Activated B cell treated with CpG ODN at 0.5 μM for 24 hours (primary cell): ENCODE measurements at regions of chr12 and their contacts with region 1.

Region 1: DNA sequence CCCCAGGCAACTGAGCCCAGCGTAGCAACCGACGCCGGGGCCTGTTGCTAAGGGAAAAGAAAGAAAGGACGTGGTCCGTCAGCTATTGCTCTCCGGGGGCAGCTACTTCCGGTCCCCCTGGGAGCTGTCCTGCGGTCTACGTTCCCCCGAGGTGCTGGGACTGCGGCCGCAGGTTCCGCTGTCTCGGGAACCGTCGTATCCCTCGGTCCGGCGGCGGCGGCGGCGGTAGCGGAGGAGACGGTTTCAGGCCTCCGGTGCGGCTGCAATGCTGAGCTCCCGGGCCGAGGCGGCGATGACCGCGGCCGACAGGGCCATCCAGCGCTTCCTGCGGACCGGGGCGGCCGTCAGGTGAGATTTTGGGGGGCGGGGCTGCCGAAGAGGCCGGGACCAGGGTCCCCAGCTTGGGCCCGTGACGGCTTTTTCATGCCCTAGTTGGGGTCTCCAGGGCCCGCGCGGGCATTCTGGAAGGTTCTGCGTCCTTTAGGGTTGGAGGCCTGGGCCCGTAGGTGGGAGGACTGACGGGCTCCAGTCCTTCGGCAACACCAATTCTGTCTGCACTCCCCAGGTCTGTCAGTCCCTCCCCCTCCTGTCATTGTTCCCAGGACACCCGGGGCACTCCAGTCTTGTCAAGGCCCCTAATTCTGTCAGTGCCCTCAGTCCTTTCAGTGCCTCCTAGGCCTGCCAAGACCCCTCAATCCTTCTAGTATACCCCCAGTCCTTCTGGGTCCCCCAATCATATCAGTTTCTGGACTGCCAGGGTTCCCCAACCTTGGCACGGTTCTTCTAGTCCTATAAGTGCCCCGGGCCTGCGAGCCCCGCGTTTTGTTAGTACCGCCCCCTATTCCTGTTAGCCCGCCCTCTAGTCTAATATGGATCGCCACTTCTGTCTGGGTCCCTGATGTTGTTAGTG is at the start of gene USP30:
- DNase-seq: peak; percentile 80
- ATAC-seq: peak; percentile 85
- H3K4me3 Mint-ChIP-seq: peak within 1 kb of the TSS; percentile 85
- H3K27ac Mint-ChIP-seq: peak within 1 kb of the TSS; percentile 86
- H3K4me1 Mint-ChIP-seq: peaks cover 22% of the 10 kb centered on the region
- H3K27me3 Mint-ChIP-seq: no peaks in the 10 kb centered on the region
- CTCF ChIP-seq: no peak
- total RNA-seq, gene USP30: 17.4 and 17.7 TPM in 2 replicates

Region 2: GRCh38 chr12:107685360-107686248 is 1367.1 kb before region 1 on chr12 and contains the start of gene PWP1:
- CTCF ChIA-PET with region 1: no interaction called
- POLR2A ChIA-PET with region 1: no interaction called
- intact Hi-C with region 1: loop called (anchors 1 kb)
- DNase-seq: peak; percentile 93
- ATAC-seq: peak; percentile 90
- H3K4me3 Mint-ChIP-seq: peak within 1 kb of the TSS; percentile 96
- H3K27ac Mint-ChIP-seq: peak within 1 kb of the TSS; percentile 97
- H3K4me1 Mint-ChIP-seq: peaks cover 23% of the 10 kb centered on the region
- H3K27me3 Mint-ChIP-seq: no peaks in the 10 kb centered on the region
- CTCF ChIP-seq: no peak
- total RNA-seq, gene PWP1: 49.4 and 53.5 TPM in 2 replicates

Region 3: DNA sequence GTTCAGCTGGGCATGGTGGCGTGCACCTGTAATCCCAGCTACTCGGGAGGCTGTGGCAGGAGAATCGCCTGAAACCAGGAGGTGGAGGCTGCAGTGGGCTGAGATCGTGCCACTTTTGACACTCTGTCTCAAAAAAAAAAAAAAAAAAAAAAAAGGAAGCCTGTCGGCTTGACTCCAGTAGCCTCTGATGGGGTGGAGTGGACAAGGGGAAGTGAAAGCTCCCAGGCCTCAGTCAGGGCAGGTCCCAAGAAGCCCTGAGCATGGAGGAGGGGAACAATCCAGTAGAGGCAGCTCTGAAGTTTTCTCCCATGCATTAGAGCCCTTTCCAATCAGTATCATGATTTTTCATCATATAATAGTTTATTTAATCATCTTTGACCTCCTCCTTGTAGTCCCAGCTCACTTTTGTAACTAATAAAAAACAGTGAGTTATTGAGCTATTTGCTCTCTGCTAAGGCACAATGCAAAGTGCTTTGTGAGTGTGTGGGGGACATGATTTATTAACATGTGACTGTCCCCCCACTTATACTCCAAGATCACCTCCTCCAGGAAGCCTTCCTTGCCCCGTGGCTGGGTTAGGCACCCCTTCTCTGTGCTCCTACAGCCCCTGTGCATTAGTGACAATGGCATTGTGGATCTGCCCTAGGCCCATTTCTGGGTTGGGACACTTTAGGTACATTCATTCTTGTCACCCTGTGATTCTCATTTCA is 190.6 kb before region 1 on chr12:
- CTCF ChIA-PET with region 1: no interaction called
- POLR2A ChIA-PET with region 1: interaction called, 4 read pairs
- intact Hi-C with region 1: loop called (anchors 2 kb)
- DNase-seq: peak; percentile 44
- ATAC-seq: peak; percentile 47
- H3K4me3 Mint-ChIP-seq: no peak overlapping the region
- H3K27ac Mint-ChIP-seq: peak overlapping the region; percentile 27
- H3K4me1 Mint-ChIP-seq: peaks cover 42% of the 10 kb centered on the region
- H3K27me3 Mint-ChIP-seq: no peaks in the 10 kb centered on the region
- CTCF ChIP-seq: no peak

Region 4: GRCh38 chr12:108995370-108995992 is 57.2 kb before region 1 on chr12:
- CTCF ChIA-PET with region 1: no interaction called
- POLR2A ChIA-PET with region 1: no interaction called
- intact Hi-C with region 1: no loop called
- DNase-seq: no peak
- ATAC-seq: no peak
- H3K4me3 Mint-ChIP-seq: no peak overlapping the region
- H3K27ac Mint-ChIP-seq: no peak overlapping the region
- H3K4me1 Mint-ChIP-seq: no peaks in the 10 kb centered on the region
- H3K27me3 Mint-ChIP-seq: peaks cover 12% of the 10 kb centered on the region
- CTCF ChIP-seq: no peak

Region 5: DNA sequence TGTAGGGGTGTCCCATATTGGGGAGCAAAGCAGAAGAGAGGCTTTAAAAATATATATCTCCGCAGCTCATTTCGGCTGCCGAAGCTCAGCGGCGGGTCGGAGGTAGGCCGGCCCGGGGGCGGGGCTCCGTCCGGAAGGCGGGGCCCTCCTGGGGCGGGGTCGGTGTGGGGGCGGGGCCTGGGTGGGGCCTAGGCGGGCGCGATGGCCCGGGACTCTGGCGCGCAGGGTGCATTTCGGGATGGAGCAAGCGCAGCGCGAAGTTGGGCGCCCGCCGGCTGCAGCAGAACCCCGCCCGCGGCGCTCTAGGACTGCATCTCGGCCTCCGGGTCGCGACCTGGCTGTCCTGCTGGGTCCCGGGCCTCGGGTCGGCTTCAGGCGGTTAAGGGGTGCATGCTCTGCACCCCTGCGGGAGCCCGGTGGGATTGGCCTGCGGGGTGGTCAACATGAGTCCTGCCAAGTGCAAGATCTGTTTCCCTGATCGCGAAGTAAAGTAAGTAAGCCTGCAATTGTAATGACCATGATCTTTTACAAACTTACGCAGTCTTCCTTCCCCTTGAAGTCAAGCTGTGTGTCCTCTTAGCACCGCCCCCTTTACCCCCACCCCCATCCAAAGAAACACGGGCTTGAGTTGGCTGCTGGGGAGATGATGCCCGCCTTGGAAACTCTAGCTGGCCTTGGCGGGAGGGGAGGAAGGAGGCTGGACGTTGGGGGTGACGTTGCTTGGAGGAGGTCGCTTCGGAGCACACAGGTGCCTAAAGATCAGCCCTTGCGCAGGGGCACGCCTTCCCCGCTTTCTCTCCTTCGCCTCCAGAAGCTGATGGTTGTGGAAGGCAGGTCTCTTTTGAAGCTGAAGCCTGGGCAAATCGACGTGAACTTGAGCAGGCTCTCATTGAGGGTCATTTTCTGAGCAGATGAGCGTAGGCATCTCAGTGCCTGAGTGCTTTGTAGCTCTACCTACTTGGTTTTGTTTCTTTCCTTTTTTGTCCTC is 102.1 kb after region 1 on chr12:
- CTCF ChIA-PET with region 1: no interaction called
- POLR2A ChIA-PET with region 1: no interaction called
- intact Hi-C with region 1: loop called (anchors 5 kb)
- DNase-seq: peak; percentile 76
- ATAC-seq: peak; percentile 97
- H3K4me3 Mint-ChIP-seq: peak overlapping the region; percentile 95
- H3K27ac Mint-ChIP-seq: peak overlapping the region; percentile 90
- H3K4me1 Mint-ChIP-seq: peaks cover 24% of the 10 kb centered on the region
- H3K27me3 Mint-ChIP-seq: peaks cover 12% of the 10 kb centered on the region
- CTCF ChIP-seq: no peak

Region 6: DNA sequence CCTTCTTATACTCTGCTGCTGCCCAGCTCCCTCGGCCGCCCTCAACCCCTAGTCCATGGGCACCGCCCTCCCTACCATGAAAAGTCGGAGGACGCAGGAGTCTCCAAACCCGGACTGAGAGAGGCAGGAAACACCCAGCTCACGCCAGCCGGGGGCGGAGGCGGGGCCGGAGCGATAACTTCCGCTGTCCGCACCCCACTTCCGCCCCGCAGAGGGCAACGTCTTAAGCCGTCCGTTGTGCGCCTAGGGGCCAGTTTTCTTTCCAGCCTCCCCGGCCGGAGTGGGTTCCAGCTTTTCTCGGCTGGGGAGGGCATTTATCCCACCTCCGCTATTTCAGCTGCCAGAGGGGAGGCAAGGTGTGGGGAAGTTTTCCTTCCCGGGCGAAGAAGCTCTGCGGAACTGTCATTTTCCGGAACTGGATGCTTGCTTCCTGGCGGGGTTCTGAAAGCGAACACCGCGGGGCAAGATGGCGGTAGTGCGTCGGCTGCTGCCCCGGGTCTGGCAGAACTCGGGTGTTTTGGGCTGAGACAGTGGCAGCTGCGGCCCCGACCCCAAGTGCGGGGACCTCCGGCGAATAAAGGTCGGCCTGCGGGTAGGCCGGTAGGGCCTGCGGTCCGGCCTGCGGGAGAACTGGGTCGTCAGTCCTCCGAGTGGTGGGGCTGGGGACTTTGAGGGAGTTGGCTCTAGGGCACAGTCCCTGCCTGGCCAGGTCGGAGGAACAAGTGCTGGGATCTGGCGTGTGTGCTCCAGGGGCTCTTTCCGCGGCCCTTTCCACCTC is 424.7 kb after region 1 on chr12 and contains the starts of genes KCTD10 and UBE3B:
- CTCF ChIA-PET with region 1: no interaction called
- POLR2A ChIA-PET with region 1: no interaction called
- intact Hi-C with region 1: loop called (anchors 5 kb)
- DNase-seq: peak; percentile 84
- ATAC-seq: peak; percentile 94
- H3K4me3 Mint-ChIP-seq: peak within 1 kb of the TSS; percentile 99
- H3K27ac Mint-ChIP-seq: peak within 1 kb of the TSS; percentile 98
- H3K4me1 Mint-ChIP-seq: peaks cover 38% of the 10 kb centered on the region
- H3K27me3 Mint-ChIP-seq: no peaks in the 10 kb centered on the region
- CTCF ChIP-seq: no peak
- total RNA-seq, gene KCTD10: 32.7 and 38.7 TPM in 2 replicates
- total RNA-seq, gene UBE3B: 35.4 and 36.9 TPM in 2 replicates